ENCODE measurements at regions of chr16 and their contacts with region 1.

Region 1: DNA sequence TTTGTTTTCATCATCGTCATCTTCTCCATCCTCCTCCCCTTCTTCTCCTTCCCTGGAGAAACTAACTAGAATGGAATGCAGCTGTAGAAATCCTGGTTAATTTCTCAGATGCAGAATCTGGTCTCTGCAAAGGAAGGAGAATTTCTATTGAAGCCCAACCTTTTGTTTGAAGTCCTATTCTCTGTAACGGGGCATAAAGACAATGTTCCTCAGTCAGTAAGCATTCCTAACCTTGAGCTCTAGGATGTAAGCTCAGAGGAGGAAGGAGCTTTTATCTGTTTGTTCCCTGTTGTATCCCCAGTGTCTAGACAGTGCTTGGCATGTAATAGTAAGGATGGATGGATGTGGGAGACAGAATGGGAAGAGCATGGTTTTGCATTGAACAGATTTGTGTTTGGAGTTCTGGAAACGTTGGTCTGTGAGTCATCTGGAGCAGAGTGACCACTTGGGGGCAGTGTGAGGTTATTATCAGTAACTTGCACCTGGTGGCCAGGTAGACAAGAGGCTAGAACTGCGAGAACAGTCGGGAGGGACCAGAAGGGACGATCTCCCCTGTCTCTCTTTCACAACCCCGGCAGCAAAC is 363.7 kb downstream of the SNX29 start:
- DNase-seq: peak; percentile 49
- CTCF ChIP-seq: no peak

Region 2: GRCh38 chr16:13206606-13207005 is 866.4 kb after region 1 on chr16:
- in situ Hi-C with region 1: no loop called
- DNase-seq: no peak
- CTCF ChIP-seq: no peak

Region 3: DNA sequence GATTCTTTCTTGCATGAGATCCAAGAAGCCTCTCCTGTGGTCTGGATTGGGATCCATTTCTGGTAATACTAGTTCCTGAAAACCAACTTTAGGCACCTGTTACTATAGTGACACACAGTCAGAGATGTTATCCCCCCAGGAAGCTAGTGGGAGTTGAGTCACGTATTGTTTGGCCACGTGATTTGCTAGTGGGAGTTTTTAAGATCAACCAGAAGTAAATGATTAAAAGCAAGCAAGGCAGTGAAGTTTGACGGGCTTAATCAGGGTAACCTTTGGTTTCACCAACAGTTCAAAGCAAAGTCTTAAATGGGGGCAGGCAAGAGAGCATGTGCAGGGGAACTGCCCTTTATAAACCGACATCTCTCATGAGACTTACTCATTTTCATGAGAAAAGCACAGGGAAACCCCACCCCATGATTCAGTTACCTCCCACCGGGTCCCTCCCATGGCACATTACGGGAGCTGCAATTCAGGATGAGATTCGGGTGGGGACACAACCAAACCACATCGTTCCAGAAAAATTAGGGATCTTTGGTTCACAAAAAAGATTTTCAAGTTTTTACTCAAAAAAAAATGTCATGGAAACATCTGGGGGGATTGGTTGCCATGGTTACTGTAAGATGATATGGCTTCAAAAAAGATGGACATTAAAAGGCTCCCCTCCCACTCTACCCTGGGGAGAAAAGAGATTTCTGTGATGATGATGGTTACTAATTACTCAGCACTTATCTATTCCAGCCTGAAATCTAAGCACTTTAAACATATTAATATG is 1096.6 kb after region 1 on chr16:
- in situ Hi-C with region 1: loop called (anchors 25 kb)
- DNase-seq: peak; percentile 55
- CTCF ChIP-seq: no peak